SK-N-SH (cell line): ENCODE measurements at regions of chr5 and their contacts with region 1.

Region 1: GRCh38 chr5:83035373-83036101 is 41.7 kb downstream of the TMEM167A start:
- DNase-seq: peak; percentile 68
- H3K4me3 ChIP-seq: no peak overlapping the region; a peak in 1 of 4 replicates
- H3K27ac ChIP-seq: peak overlapping the region; percentile 9 to 99; a peak in 2 of 4 replicates
- H3K4me1 ChIP-seq: peaks cover 0 to 22% of the 10 kb centered on the region in 2 experiments; a peak in 2 of 4 replicates
- H3K27me3 ChIP-seq: no peaks in the 10 kb centered on the region
- CTCF ChIP-seq: no peak
- EP300 ChIP-seq: peak in 1 of 2 experiments; percentile 72; a peak in 2 of 4 replicates
- RAD21 ChIP-seq: peak; percentile 34

Region 2: GRCh38 chr5:83076742-83077661 is 41.5 kb after region 1 on chr5 and contains the starts of genes TMEM167A and XRCC4:
- CTCF ChIA-PET with region 1: no interaction called
- POLR2A ChIA-PET with region 1: interaction called, 11 read pairs
- DNase-seq: peak; percentile 85
- H3K4me3 ChIP-seq: peak within 1 kb of the TSS; percentile 84 to 97
- H3K27ac ChIP-seq: peak within 1 kb of the TSS; percentile 87 to 92
- H3K4me1 ChIP-seq: peaks cover 9 to 12% of the 10 kb centered on the region in 2 experiments; a peak in 3 of 4 replicates
- H3K27me3 ChIP-seq: no peaks in the 10 kb centered on the region
- CTCF ChIP-seq: no peak
- EP300 ChIP-seq: no peak
- RAD21 ChIP-seq: peak; percentile 2; the same call in 1 of the 2 replicates
- polyA plus RNA-seq, gene TMEM167A: 23.7 and 38.2 TPM in 2 replicates
- polyA plus RNA-seq, gene XRCC4: 1.8 and 2.4 TPM in 2 replicates